ENCODE measurements at regions of chr2 and their contacts with region 1.

Region 1: DNA sequence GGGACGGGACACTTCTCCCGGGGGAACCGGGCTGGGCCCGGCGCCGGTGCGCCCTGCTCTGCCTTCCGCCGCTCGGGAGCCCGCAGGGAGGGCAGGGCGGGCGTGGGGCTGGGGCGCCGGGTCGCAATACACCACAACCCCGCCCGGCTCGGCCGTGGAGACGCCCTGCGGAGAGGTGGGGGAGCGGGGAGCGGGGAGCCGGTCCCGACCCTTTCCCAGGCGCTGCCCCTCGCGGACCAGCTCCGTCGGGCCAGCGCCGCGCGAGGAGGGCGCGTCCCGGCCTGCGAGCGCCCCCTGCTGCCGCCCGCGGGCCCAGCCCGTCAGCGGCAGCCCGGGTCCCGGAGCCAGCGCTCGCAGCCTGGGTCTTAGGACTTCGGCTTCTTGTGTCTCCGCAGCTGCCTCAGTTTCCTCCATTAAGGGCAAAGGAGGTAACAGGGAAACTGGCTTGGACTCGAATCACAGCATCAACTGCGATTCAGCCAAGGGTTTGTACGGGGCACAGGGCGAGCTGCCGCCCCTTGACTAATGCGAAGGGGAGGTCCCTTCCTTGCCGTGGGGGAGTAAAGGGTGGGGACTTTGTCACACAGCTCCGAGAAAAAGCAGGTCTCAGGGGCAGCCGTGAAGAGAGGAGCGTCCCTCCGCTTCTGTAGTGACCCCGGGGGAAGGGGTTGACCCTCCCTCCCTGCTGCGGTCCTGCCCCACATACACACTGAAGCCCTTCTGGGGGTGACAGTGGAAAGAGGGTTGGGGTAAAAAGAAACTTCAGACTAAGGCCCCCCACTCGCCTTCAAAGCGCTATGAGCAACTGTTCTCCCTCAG is 717 bp upstream of the ADRA2B start:
- DNase-seq: peak; percentile 40 to 85
- ATAC-seq: peak; percentile 78 to 88
- H3K4me3 ChIP-seq: peak overlapping the region; percentile 69
- H3K27ac ChIP-seq: peak overlapping the region; percentile 56 to 78; a peak in 5 of 6 replicates
- H3K4me1 ChIP-seq: peaks cover 4% of the 10 kb centered on the region; the same call in 2 of the 3 replicates
- CTCF ChIP-seq: peak; percentile 97
- EP300 ChIP-seq: no peak
- POLR2A ChIP-seq: no peak
- RAD21 ChIP-seq: peak; percentile 36 to 91; a peak in 4 of 5 replicates

Region 2: GRCh38 chr2:96083064-96083939 is 33.8 kb before region 1 on chr2:
- CTCF ChIA-PET with region 1: interaction called, 15 read pairs
- POLR2A ChIA-PET with region 1: no interaction called
- DNase-seq: no peak
- ATAC-seq: no peak; a peak in 1 of 6 replicates
- H3K4me3 ChIP-seq: no peak overlapping the region
- H3K27ac ChIP-seq: no peak overlapping the region
- H3K4me1 ChIP-seq: no peaks in the 10 kb centered on the region
- CTCF ChIP-seq: no peak
- EP300 ChIP-seq: no peak
- POLR2A ChIP-seq: no peak
- RAD21 ChIP-seq: no peak

Region 3: DNA sequence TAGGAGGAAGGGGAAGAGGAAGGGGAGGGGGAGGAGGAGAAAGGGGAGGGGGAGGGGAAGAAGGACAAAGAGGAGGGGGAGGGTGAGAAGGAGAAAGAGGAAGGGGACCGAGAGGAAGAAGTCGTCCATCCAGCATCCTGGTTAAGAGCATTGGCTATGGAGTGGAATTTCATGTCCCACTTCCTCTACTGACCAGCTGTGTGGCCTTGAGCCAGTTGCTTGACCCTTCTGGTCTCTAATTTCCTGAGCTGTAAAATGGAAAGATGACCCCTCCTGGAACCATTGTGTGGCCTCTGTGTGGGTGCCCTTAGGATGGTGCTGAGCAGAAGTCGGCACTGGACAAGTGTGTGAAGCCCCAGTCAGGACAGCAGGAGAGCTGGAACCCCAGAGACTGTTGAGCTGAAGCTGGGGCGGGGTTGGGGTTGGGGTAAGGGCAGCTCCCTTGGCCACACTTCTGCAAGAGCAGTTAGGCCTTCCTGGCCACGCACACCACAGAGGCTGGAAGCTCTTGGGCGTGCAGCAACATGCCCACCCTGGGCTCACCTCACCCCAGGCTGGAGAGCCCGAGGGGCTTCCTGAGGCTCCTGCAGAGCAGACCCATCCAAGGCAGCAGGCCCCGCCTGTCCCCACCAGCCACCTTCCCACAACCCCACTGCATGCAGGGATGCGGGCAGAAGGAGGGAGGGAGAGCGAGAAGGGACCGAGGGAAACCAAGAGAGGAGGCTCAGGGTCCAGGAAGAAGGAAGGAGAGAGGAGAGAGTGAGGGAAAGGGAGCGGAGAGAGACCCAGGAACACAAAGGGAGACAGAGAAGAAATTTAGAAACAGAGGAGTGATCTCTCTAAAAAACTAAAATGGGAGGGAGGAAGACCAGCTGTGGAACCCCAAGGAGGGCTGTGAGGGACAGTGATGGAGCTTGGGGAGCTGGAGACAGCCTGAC is 17.0 kb before region 1 on chr2:
- CTCF ChIA-PET with region 1: interaction called, 126 read pairs
- POLR2A ChIA-PET with region 1: no interaction called
- DNase-seq: no peak
- ATAC-seq: no peak
- H3K4me3 ChIP-seq: no peak overlapping the region
- H3K27ac ChIP-seq: 0 out of 6 replicates have a peak overlapping the region, but pooled peaks of 1 of the 2 experiments have one; percentile 13
- H3K4me1 ChIP-seq: no peaks in the 10 kb centered on the region
- CTCF ChIP-seq: no peak
- EP300 ChIP-seq: no peak
- POLR2A ChIP-seq: no peak
- RAD21 ChIP-seq: no peak

Region 4: GRCh38 chr2:96138179-96139145 is 21.4 kb after region 1 on chr2 and contains the start of gene ASTL:
- CTCF ChIA-PET with region 1: interaction called, 35 read pairs
- POLR2A ChIA-PET with region 1: no interaction called
- DNase-seq: peak; percentile 31 to 39
- ATAC-seq: peak; percentile 64 to 86; a peak in 4 of 6 replicates
- H3K4me3 ChIP-seq: no peak within 1 kb of the TSS
- H3K27ac ChIP-seq: no peak within 1 kb of the TSS
- H3K4me1 ChIP-seq: no peaks in the 10 kb centered on the region
- CTCF ChIP-seq: peak; percentile 48; the same call in 2 of the 3 replicates
- EP300 ChIP-seq: no peak
- POLR2A ChIP-seq: no peak
- RAD21 ChIP-seq: peak; percentile 65 to 76
- polyA plus RNA-seq, gene ASTL: not detected in 2 replicates

Region 5: GRCh38 chr2:96174251-96175144 is 57.4 kb after region 1 on chr2:
- CTCF ChIA-PET with region 1: interaction called, 12 read pairs
- POLR2A ChIA-PET with region 1: no interaction called
- DNase-seq: peak; percentile 72 to 75
- ATAC-seq: peak; percentile 97 to 99
- H3K4me3 ChIP-seq: no peak overlapping the region
- H3K27ac ChIP-seq: no peak overlapping the region
- H3K4me1 ChIP-seq: no peaks in the 10 kb centered on the region
- CTCF ChIP-seq: peak; percentile 83
- EP300 ChIP-seq: no peak
- POLR2A ChIP-seq: no peak
- RAD21 ChIP-seq: peak; percentile 86 to 88

Measured in A549 (cell line).